ENCODE measurements at regions of chr19 and their contacts with region 1.

Region 1: DNA sequence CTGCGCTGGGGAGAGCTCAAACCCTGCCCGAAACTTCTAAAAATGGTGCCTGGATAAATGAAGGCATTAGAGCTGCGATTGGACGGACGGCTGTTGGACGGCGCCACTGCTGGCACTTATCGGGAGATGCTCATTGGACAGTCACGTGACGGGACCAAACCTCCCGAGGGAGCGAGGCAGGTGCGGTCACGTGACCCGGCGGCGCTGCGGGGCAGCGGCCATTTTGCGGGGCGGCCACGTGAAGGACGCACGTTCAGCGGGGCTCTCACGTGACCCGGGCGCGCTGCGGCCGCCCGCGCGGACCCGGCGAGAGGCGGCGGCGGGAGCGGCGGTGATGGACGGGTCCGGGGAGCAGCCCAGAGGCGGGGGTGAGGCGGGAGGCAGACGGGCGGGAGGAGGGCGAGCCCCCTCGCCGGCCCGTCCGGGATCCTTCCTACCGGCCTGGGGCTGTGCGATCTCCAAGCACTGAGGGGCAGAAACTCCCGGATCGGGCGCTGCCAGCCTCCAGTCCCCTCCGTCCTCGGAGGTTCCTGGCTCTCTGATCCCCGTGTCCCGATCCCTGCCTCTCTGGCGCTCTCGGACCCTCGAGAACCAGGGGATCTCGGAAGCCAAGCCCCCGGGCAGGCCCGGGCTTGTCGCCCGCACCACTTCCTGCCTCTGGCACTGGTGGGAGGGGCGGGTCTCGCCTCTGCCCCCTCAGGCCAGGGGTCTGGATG is at the start of gene BAX:
- DNase-seq: peak; percentile 94
- H3K4me3 ChIP-seq: peak within 1 kb of the TSS; percentile 57 to 91 (median 70)
- H3K27ac ChIP-seq: peak within 1 kb of the TSS; percentile 63
- H3K4me1 ChIP-seq: peaks cover 14% of the 10 kb centered on the region
- H3K27me3 ChIP-seq: no peaks in the 10 kb centered on the region
- CTCF ChIP-seq: no peak
- total RNA-seq, gene BAX: 53.7 to 180 TPM

Region 2: GRCh38 chr19:48872182-48872883 is 82.4 kb before region 1 on chr19 and contains the start of gene PPP1R15A:
- CTCF ChIA-PET with region 1: no interaction called
- dilution Hi-C with region 1: no loop called
- in situ Hi-C with region 1: no loop called
- intact Hi-C with region 1: loop called (anchors 2 kb)
- DNase-seq: peak; percentile 98
- H3K4me3 ChIP-seq: peak within 1 kb of the TSS; percentile 67 to 93 (median 89)
- H3K27ac ChIP-seq: peak within 1 kb of the TSS; percentile 99
- H3K4me1 ChIP-seq: peaks cover 33% of the 10 kb centered on the region
- H3K27me3 ChIP-seq: no peaks in the 10 kb centered on the region
- CTCF ChIP-seq: no peak
- total RNA-seq, gene PPP1R15A: 28.8 to 200 TPM

Region 3: GRCh38 chr19:48881741-48882657 is 72.8 kb before region 1 on chr19:
- CTCF ChIA-PET with region 1: no interaction called
- dilution Hi-C with region 1: loop called (anchors 5 kb)
- in situ Hi-C with region 1: loop called in 1 of 2 experiments (anchors 10 kb)
- intact Hi-C with region 1: no loop called
- DNase-seq: peak; percentile 26
- H3K4me3 ChIP-seq: no peak overlapping the region
- H3K27ac ChIP-seq: no peak overlapping the region
- H3K4me1 ChIP-seq: no peaks in the 10 kb centered on the region
- H3K27me3 ChIP-seq: no peaks in the 10 kb centered on the region
- CTCF ChIP-seq: no peak

Region 4: GRCh38 chr19:48887861-48888612 is 66.7 kb before region 1 on chr19:
- CTCF ChIA-PET with region 1: no interaction called
- dilution Hi-C with region 1: loop called (anchors 5 kb)
- in situ Hi-C with region 1: loop called (anchors 5 to 10 kb)
- intact Hi-C with region 1: no loop called
- DNase-seq: no peak
- H3K4me3 ChIP-seq: no peak overlapping the region
- H3K27ac ChIP-seq: no peak overlapping the region
- H3K4me1 ChIP-seq: no peaks in the 10 kb centered on the region
- H3K27me3 ChIP-seq: no peaks in the 10 kb centered on the region
- CTCF ChIP-seq: no peak

Region 5: DNA sequence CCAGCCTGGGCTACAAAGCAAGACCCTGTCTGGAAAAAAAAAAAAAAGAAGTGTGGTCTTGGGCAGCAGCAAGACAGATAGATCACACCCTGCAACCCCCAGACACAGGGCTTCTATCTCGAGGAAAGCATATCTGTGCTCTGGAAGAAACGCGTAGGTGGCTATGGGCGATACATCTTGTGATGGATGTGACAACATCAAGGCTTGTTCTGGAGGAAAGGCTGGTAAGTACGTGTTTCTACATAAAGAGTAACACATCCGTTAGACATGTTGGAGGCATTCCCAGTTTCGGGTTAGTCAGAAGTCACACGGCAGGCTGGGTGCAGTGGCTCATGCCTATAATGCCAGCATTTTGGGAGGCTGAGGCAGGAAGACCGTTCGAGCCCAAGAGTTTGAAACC is 27.8 kb before region 1 on chr19:
- CTCF ChIA-PET with region 1: no interaction called
- dilution Hi-C with region 1: no loop called
- in situ Hi-C with region 1: no loop called
- intact Hi-C with region 1: loop called (anchors 1 kb)
- DNase-seq: peak; percentile 99
- H3K4me3 ChIP-seq: no peak overlapping the region
- H3K27ac ChIP-seq: peak overlapping the region; percentile 92
- H3K4me1 ChIP-seq: peaks cover 23% of the 10 kb centered on the region
- H3K27me3 ChIP-seq: no peaks in the 10 kb centered on the region
- CTCF ChIP-seq: no peak

Region 6: GRCh38 chr19:48965040-48965805 is 10.5 kb after region 1 on chr19 and contains the start of gene FTL:
- CTCF ChIA-PET with region 1: no interaction called
- dilution Hi-C with region 1: no loop called
- in situ Hi-C with region 1: no loop called
- intact Hi-C with region 1: no loop called
- DNase-seq: peak; percentile 80
- H3K4me3 ChIP-seq: peak within 1 kb of the TSS; percentile 51 to 62 (median 52)
- H3K27ac ChIP-seq: peak within 1 kb of the TSS; percentile 7
- H3K4me1 ChIP-seq: peaks cover 27% of the 10 kb centered on the region
- H3K27me3 ChIP-seq: no peaks in the 10 kb centered on the region
- CTCF ChIP-seq: no peak
- total RNA-seq, gene FTL: 186 to 287 TPM